ENCODE measurements at regions of chr9 and their contacts with region 1.

Region 1: GRCh38 chr9:71819115-71819739 is 50.9 kb upstream of the CEMIP2 start:
- DNase-seq: peak; percentile 31
- ATAC-seq: no peak

Region 2: DNA sequence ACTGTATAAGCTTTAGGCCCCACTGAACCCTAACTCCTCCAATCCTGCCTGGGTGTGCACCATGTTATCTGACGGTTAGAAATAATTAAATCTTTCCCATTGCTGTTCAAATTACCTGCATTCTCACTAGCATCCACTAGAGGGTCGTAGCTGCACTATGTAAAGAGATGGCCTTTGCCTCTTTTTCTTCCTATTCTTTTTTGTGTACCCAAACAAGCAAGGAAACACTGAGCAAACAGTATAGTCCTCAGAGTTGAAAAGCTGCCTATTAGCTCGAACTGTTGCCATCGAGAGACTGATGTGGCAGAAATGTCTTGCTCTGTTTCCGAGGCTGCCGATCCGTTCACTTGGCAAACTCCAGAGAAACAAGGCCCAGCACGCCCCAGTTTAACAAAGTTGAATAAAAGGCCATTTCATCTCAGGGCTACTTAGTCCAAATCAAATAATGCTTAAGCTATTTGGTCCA is 534.0 kb before region 1 on chr9:
- intact Hi-C with region 1: loop called in 1 of 2 experiments (anchors 10 kb)
- DNase-seq: peak; percentile 22
- ATAC-seq: peak; percentile 57 to 69

Region 3: DNA sequence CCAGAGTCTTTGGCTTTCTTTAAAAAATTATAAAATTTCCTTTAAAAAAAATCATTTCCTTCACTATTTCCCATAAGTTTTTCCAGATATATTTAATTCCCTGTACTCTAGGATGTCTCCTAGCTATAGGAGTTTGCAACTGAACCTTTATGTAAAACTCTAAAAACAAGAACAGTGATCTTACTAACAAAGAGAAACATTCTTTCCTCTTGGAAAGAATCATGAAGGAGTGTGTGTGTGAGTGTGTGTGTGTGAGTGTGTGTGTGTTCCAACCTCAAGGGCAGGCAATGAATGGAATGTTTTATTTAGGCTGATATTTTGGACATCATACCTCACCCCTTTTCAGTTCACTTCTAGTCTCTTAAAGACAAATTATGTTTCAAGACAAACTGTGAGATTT is 360.1 kb before region 1 on chr9:
- intact Hi-C with region 1: no loop called
- DNase-seq: no peak
- ATAC-seq: no peak

Measured in left cardiac atrium (tissue), 4 donors.